ENCODE measurements at regions of chr7 and their contacts with region 1.

Region 1: DNA sequence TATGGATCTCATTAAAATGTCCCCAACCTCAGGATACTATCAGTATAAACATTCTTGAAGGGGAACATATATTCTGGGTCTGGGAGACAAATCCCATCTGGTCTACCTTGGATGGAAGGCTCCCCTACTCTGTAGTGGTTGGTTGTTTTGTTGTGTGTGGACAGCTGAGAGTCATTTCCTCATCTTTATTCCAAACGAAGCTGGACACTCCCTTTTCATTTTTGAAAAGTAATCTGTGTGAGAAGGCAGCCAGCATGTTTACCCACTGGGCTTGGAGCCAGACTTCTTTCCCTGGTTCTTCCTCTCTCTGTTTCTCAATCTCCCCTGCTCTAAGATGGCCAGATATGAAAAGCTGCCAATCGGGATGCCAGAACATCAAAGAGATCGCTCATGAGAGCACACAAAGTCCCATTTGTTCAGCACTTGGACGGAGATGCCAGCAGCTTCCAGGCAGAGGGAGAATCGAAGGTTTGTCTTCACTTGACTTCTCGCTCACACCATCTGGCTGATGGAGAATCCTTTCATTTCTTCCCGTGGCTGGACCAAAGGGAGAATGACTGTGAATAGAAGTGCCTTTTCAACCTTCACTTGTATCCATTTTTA is 108.1 kb upstream of the AGR3 start:
- DNase-seq: peak; percentile 92 to 99
- H3K4me3 ChIP-seq: peak overlapping the region; percentile 32; the same call in 1 of the 2 replicates
- H3K27ac ChIP-seq: peak overlapping the region; percentile 84
- H3K4me1 ChIP-seq: peaks cover 40% of the 10 kb centered on the region
- H3K27me3 ChIP-seq: no peaks in the 10 kb centered on the region
- CTCF ChIP-seq: no peak

Region 2: DNA sequence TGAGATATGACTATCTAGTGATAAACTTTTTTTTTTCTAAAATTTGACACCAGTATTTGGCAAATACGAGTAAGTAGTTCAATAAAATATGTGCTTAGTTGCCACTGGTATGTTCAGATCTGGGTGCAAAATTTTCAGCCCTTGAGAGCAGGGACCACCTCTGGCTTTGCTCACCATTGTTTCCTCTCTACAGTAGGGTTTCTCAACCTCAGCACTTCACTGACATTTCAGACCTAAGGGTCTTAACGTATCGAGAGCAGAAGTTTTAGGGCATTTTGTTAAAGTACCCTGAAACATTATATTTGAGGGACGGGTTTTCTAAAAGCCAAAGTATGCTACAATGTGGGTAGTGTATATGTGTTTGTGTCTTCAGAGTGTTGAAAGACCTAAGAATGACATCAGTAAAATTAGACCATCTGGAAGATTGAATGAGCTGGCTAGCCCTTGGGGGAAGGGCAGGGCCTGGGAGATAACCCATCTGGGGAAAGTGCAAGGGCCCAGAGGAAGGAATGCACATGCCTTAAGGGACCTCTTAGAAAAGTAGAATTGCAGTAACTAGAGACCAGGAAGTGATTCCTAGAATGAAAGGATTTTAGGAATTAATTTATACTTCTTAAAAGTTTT is 332.1 kb before region 1 on chr7:
- CTCF ChIA-PET with region 1: no interaction called
- POLR2A ChIA-PET with region 1: no interaction called
- intact Hi-C with region 1: no loop called
- DNase-seq: peak; percentile 79 to 83
- H3K4me3 ChIP-seq: no peak overlapping the region
- H3K27ac ChIP-seq: peak overlapping the region; percentile 47
- H3K4me1 ChIP-seq: peaks cover 58% of the 10 kb centered on the region
- H3K27me3 ChIP-seq: no peaks in the 10 kb centered on the region
- CTCF ChIP-seq: no peak

Region 3: GRCh38 chr7:17009007-17009719 is 19.3 kb after region 1 on chr7:
- CTCF ChIA-PET with region 1: no interaction called
- POLR2A ChIA-PET with region 1: no interaction called
- intact Hi-C with region 1: loop called (anchors 2 kb)
- DNase-seq: no peak
- H3K4me3 ChIP-seq: no peak overlapping the region
- H3K27ac ChIP-seq: no peak overlapping the region
- H3K4me1 ChIP-seq: peaks cover 21% of the 10 kb centered on the region
- H3K27me3 ChIP-seq: no peaks in the 10 kb centered on the region
- CTCF ChIP-seq: peak; percentile 62

Region 4: GRCh38 chr7:17095001-17095574 is 105.2 kb after region 1 on chr7:
- CTCF ChIA-PET with region 1: no interaction called
- POLR2A ChIA-PET with region 1: no interaction called
- intact Hi-C with region 1: loop called (anchors 2 kb)
- DNase-seq: peak; percentile 63 to 89
- H3K4me3 ChIP-seq: no peak overlapping the region
- H3K27ac ChIP-seq: peak overlapping the region; percentile 24; the same call in 1 of the 2 replicates
- H3K4me1 ChIP-seq: peaks cover 19% of the 10 kb centered on the region
- H3K27me3 ChIP-seq: no peaks in the 10 kb centered on the region
- CTCF ChIP-seq: no peak

Region 5: DNA sequence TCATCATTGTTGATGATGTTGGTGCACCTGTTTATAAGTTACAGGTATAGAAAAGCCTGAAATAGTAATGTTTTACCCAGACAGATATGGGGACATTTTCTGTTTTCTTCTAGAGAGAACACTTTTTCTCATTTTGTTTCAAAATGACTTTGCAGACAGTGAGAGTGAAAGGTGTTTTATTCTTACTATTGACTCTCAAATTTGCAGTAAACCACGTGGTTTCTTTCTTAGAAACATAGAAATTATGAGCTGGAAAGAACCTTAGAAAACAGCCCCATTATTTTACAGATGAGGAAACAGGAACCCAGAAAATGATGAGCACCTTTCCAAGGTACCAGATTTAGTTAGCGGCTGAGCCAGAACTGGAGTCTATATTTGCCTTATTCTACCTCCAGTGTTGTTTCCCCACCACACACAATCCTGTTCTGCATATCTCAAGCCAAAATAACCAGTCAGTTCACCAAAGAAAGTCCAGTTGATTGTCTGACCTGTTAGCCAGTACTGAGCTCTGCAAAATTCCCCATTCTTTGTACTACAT is 169.7 kb after region 1 on chr7:
- CTCF ChIA-PET with region 1: no interaction called
- POLR2A ChIA-PET with region 1: no interaction called
- intact Hi-C with region 1: no loop called
- DNase-seq: peak in 1 of 2 experiments; percentile 12
- H3K4me3 ChIP-seq: no peak overlapping the region
- H3K27ac ChIP-seq: no peak overlapping the region
- H3K4me1 ChIP-seq: no peaks in the 10 kb centered on the region
- H3K27me3 ChIP-seq: no peaks in the 10 kb centered on the region
- CTCF ChIP-seq: no peak

Measured in PC-9 (cell line).